GM10248 (cell line): ENCODE measurements at regions of chr13 and their contacts with region 1.

Region 1: DNA sequence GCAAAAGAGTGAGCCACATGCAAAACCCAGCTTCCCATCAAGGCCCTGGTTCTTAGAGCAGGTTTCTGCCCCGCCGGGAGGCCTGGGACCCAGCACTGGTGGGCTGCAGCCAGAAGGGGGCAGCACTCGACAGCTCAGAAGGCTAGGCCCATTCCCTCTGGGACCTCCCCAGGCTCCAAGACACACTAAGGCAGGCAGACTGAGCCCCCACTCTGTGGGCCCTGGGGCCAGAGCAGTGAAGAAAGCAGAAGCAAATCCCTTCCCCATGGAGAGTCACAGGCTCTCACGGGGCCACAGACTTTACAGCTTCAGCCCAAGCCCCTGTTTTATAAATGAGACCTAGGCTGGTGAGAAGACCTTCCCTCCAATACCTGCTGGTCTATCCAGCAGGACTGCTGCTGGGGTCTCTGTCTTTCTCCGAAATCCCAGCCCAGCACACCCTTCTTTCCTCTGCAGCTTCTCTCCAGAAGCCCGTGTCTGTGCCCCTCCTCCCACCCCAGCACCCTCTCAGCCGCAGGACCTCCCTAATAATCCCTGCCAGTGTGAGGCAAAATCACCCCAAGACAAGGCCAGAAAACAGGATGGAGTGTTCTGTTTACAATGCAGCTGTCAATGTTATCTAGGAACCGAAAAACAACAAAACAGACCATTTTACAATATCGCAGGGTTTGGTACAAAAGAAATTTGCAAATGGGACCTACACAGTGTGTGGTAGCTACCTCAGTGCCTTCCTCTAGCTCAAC is 109.3 kb downstream of the ABCC4 start:
- DNase-seq: peak; percentile 74
- CTCF ChIP-seq: peak; percentile 91

Region 2: DNA sequence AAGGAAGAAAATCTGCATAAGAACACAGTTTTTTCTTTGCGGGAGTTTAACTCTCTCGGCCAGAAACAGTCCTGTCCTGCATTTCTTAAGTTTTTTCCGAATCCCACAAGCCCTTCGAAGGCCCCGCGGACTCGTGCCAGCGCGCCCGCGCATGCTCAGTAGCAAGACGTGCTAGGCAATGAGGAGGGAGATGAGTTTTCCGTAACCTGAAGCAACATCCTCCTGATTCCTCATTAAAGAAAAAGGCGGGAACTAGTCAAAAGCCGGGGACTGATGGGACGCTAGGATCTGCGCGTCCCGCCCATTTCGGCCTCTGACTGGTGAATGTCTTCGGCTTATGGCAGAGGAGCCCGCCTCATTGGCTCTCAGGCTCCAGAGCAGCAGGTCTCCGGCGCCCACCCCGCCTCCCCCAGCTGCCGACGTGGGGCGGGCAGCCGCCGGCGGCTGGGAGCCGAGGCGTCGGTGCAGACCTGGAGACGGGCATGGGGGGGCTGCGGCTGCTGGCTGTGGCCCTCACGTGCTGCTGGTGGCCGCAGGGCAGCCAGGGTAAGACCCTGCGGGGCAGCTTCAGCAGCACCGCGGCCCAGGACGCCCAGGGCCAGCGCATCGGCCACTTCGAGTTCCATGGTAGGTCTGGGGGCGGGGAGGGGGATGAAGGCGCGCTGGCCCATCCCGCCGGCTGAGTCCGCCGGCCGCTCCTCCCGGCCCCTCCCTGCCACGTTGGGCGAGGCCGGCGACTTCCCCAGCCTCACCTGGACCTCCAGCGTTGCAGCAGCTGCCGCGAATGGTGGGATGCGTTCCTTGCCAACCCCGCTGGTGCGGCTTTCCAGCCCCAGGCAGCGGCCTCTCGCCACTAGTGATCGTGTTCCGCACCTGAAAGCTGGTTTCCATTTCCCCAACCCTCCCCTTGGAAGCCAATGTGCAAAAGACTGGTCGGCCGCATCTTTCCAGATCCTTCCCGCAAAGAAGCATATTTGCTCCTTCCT is 590.3 kb before region 1 on chr13 and contains the start of gene GPR180:
- CTCF ChIA-PET with region 1: no interaction called
- POLR2A ChIA-PET with region 1: no interaction called
- DNase-seq: peak; percentile 96
- CTCF ChIP-seq: no peak

Region 3: DNA sequence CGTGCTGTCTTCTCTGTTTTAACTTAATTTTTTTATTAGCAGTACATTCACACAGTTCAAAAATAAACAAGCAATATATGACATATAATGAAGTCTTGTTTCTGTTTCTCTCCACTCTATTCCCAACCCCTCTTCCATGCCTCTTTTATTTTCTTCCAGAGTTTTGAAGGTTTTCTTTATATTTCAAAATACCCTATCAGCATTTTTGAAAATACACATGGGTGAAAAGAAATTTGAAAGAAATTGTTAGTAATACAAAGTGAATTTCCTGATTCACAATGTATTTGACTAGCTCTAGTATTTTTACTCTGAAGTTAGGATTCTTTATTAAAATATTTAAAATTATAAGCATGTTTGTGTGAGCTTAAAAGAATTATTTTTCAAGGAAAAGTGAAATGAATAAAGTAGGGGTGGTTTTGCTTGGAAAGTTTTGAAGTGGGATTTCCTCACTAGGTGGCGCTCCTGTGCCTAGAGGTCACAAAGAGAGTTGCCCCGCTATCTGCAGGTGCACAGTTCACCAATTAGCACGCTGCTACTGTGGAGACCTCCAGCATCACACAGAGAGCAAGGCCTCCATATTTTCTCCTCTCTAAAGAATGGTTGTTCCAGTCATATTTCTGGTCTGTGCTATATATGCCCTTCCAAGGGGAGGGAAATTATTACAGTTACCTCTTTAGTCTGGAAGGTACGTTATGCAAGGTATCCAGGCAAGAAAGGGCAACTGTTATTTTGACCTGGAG is 517.2 kb before region 1 on chr13:
- CTCF ChIA-PET with region 1: interaction called, 10 read pairs
- POLR2A ChIA-PET with region 1: no interaction called
- DNase-seq: peak; percentile 48
- CTCF ChIP-seq: peak; percentile 59

Region 4: GRCh38 chr13:94993616-94994015 is 198.4 kb before region 1 on chr13:
- CTCF ChIA-PET with region 1: no interaction called
- POLR2A ChIA-PET with region 1: no interaction called
- DNase-seq: no peak
- CTCF ChIP-seq: no peak

Region 5: DNA sequence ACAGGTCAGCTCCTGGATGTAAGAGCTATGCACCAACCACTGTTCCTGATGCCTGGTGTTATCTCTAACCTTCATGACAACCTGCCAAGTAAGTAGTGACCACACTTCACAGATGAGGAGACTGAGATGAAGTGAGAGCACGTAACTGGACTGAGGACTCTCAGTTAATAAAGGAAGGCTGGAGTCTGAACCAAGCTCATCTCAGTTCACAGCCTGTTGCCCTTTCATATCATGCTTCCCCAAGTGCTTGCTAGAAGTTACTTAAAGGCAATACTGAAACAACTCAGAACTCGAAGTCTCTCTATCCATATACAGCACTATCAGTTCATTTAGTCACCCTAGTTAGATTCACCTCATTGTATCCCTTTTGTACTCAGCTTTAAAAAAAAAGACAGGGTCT is 10.4 kb before region 1 on chr13:
- CTCF ChIA-PET with region 1: interaction called, 22 read pairs
- POLR2A ChIA-PET with region 1: no interaction called
- DNase-seq: peak; percentile 44
- CTCF ChIP-seq: no peak

Region 6: GRCh38 chr13:95217920-95218830 is 26.2 kb after region 1 on chr13:
- CTCF ChIA-PET with region 1: interaction called, 17 read pairs
- POLR2A ChIA-PET with region 1: no interaction called
- DNase-seq: no peak
- CTCF ChIP-seq: no peak

Region 7: GRCh38 chr13:95301183-95301967 is 109.4 kb after region 1 on chr13 and contains the start of gene ABCC4:
- CTCF ChIA-PET with region 1: interaction called, 28 read pairs
- POLR2A ChIA-PET with region 1: no interaction called
- DNase-seq: peak; percentile 90
- CTCF ChIP-seq: no peak

Region 8: GRCh38 chr13:95387733-95388207 is 195.8 kb after region 1 on chr13:
- CTCF ChIA-PET with region 1: interaction called, 298 read pairs
- POLR2A ChIA-PET with region 1: no interaction called
- DNase-seq: no peak
- CTCF ChIP-seq: no peak

Region 9: GRCh38 chr13:95480131-95480545 is 288.1 kb after region 1 on chr13:
- CTCF ChIA-PET with region 1: interaction called, 79 read pairs
- POLR2A ChIA-PET with region 1: no interaction called
- DNase-seq: peak; percentile 10
- CTCF ChIP-seq: no peak